ENCODE measurements at regions of chr5 and their contacts with region 1.

Region 1: GRCh38 chr5:171484460-171484899 is 65.0 kb downstream of the FGF18 start:
- DNase-seq: peak; percentile 50
- ATAC-seq: peak; percentile 45; the same call in 1 of the 2 replicates
- H3K4me3 ChIP-seq: no peak overlapping the region
- H3K27ac ChIP-seq: no peak overlapping the region
- H3K4me1 ChIP-seq: no peaks in the 10 kb centered on the region
- H3K27me3 ChIP-seq: peaks cover 13% of the 10 kb centered on the region
- CTCF ChIP-seq: peak; percentile 98

Region 2: DNA sequence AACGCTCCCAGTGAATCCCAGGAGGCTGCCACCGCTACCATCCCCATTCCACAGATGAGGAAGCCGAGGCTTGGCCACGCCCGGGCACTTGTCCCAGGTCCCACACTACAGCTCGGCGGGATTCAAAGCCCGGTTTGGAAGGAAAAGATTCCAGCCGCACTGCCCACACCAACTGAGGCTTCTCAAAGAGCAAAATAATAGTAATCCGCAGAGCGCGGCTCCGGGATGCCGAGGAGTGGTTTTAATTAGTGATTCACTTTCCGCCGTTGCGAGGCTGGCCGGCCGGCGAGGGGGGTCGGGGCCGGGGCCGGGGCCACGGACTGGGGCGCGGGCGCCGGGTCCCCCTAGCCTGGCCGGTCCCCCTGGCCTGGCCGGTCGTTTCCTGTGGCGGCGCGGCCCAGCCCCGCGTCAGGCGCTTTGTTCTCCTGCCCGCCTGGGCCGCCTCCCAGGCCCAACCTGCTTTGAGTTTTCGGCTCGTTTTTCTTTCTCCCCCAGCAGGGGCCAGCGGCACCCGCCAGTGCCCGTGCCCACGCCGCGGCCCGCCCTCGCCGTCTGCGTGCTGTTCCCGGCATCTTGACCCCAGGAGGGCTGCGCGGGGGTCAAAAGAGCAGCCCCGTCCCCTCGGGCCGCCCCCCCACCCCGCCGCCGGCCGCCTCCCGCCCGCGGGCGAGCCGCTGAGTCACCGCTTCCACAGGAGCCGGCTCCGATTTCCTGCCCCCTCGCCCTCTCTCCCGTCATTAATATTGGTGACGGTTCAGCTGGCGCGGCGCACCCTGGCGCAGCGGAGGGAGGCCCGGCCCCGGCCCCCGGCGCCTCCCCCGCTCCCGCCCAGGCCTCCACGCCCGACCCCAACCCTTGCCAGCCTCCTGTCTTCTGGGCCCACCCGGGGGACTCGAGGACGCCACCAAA is 33.8 kb before region 1 on chr5:
- CTCF ChIA-PET with region 1: no interaction called
- POLR2A ChIA-PET with region 1: no interaction called
- intact Hi-C with region 1: no loop called
- DNase-seq: no peak
- ATAC-seq: no peak
- H3K4me3 ChIP-seq: no peak overlapping the region
- H3K27ac ChIP-seq: no peak overlapping the region
- H3K4me1 ChIP-seq: no peaks in the 10 kb centered on the region
- H3K27me3 ChIP-seq: peaks cover 31% of the 10 kb centered on the region
- CTCF ChIP-seq: no peak

Region 3: DNA sequence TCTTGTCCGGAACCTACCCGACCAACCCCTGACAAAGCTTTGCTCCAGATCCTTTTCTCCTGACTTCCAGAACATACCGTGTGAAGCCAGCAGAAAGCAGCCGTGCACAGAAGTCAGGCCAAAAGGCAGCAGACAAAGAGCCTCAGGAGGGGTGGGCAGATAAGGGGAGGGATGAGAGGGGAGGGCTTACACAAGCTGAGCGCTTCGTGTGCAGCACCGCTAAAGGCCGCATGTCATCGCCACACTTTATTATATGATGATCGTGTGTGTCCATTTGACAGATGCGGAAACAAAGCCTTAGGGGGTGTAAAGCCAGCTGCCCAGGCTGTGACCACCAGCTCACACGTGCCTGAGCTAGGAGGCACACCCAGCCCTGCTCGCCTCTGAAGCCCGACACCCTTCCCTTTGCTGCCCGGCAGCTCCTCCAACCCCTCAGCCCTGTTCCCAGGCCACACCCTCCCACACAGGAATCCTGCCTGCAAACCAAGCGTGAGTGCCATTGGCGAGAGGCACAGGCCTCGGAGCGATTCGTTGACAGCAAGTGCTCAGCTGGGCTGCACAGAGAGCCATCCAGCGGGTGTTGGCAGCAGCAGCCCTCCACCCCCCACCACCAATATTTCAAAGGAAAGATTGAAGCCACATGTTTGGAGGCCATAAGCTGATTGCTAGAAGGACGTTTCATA is 130.6 kb after region 1 on chr5:
- CTCF ChIA-PET with region 1: no interaction called
- POLR2A ChIA-PET with region 1: no interaction called
- intact Hi-C with region 1: loop called (anchors 10 kb)
- DNase-seq: peak; percentile 53
- ATAC-seq: peak; percentile 76
- H3K4me3 ChIP-seq: no peak overlapping the region
- H3K27ac ChIP-seq: no peak overlapping the region
- H3K4me1 ChIP-seq: no peaks in the 10 kb centered on the region
- H3K27me3 ChIP-seq: peaks cover 48% of the 10 kb centered on the region
- CTCF ChIP-seq: no peak